ENCODE measurements at regions of chr10 and their contacts with region 1.

Region 1: GRCh38 chr10:99435986-99436638 is 5.7 kb upstream of the GOT1 start:
- DNase-seq: no peak
- ATAC-seq: peak; percentile 69
- H3K4me3 Mint-ChIP-seq: no peak overlapping the region
- H3K27ac Mint-ChIP-seq: no peak overlapping the region
- H3K4me1 Mint-ChIP-seq: peaks cover 10% of the 10 kb centered on the region
- H3K27me3 Mint-ChIP-seq: no peaks in the 10 kb centered on the region
- CTCF ChIP-seq: peak; percentile 53

Region 2: GRCh38 chr10:98563811-98564210 is 872.3 kb before region 1 on chr10:
- CTCF ChIA-PET with region 1: no interaction called
- POLR2A ChIA-PET with region 1: no interaction called
- intact Hi-C with region 1: no loop called
- DNase-seq: no peak
- ATAC-seq: no peak
- H3K4me3 Mint-ChIP-seq: no peak overlapping the region
- H3K27ac Mint-ChIP-seq: no peak overlapping the region
- H3K4me1 Mint-ChIP-seq: no peaks in the 10 kb centered on the region
- H3K27me3 Mint-ChIP-seq: peaks cover 3% of the 10 kb centered on the region
- CTCF ChIP-seq: no peak

Region 3: DNA sequence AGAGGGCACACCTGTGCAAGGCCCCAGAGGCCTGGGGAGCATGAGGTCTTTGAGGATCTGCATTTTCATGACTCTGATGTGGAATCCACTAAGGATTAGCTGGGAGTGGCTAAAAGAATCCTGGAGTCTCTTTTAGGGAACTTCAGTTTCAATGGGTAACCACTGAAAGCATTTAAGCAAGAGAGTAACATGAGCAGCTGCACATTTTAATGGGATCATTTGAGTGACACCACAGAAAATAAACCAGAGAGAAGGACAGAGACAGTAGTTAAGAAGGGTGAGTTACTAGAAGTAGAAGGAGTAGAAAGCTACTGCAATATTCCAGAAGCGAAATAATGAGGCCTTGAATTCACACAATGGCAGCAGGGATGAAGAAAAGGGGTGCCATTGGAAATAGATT is 10.9 kb before region 1 on chr10:
- CTCF ChIA-PET with region 1: interaction called, 13 read pairs
- POLR2A ChIA-PET with region 1: no interaction called
- intact Hi-C with region 1: no loop called
- DNase-seq: no peak
- ATAC-seq: no peak
- H3K4me3 Mint-ChIP-seq: no peak overlapping the region
- H3K27ac Mint-ChIP-seq: no peak overlapping the region
- H3K4me1 Mint-ChIP-seq: peaks cover 14% of the 10 kb centered on the region
- H3K27me3 Mint-ChIP-seq: no peaks in the 10 kb centered on the region
- CTCF ChIP-seq: no peak

Region 4: GRCh38 chr10:99548041-99548530 is 112.0 kb after region 1 on chr10:
- CTCF ChIA-PET with region 1: interaction called, 21 read pairs
- POLR2A ChIA-PET with region 1: no interaction called
- intact Hi-C with region 1: loop called (anchors 1 kb)
- DNase-seq: no peak
- ATAC-seq: peak; percentile 56
- H3K4me3 Mint-ChIP-seq: no peak overlapping the region
- H3K27ac Mint-ChIP-seq: no peak overlapping the region
- H3K4me1 Mint-ChIP-seq: no peaks in the 10 kb centered on the region
- H3K27me3 Mint-ChIP-seq: peaks cover 55% of the 10 kb centered on the region
- CTCF ChIP-seq: no peak

Region 5: DNA sequence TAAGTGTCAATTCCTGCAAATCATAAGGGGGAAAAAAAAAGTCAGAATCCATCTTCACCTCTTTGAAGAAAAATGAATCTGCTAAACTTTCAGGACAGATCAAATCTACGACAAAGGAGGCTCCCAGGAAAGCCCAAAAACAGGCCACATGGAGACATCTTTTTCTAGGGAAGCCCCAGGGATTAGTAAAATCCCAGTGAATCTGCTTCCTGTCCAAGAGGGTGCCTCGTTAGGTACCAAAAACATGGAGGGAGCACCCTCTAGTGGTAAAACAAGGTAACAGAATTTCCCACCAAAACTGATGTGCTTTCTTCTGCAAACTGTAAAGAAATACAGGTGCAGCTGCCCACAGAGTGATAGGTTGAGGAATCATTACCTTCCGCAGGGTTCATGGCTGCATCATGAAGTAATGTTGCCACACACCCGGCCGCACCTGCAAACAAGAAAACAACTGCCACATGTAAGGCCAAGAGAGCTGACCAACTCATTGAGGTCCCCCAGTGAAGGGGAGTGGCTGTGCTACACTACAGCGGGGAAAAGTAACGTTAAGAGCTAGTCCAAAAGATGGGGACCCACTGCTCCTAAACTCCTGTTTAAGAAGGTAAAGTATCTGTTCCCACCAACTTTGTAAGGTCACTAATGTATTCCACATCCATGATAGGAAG is 176.2 kb after region 1 on chr10:
- CTCF ChIA-PET with region 1: interaction called, 26 read pairs
- POLR2A ChIA-PET with region 1: no interaction called
- intact Hi-C with region 1: loop called (anchors 1 kb)
- DNase-seq: peak; percentile 19
- ATAC-seq: peak; percentile 60
- H3K4me3 Mint-ChIP-seq: no peak overlapping the region
- H3K27ac Mint-ChIP-seq: no peak overlapping the region
- H3K4me1 Mint-ChIP-seq: peaks cover 51% of the 10 kb centered on the region
- H3K27me3 Mint-ChIP-seq: no peaks in the 10 kb centered on the region
- CTCF ChIP-seq: peak; percentile 89

Region 6: GRCh38 chr10:99698504-99699080 is 262.5 kb after region 1 on chr10:
- CTCF ChIA-PET with region 1: interaction called, 4 read pairs
- POLR2A ChIA-PET with region 1: no interaction called
- intact Hi-C with region 1: loop called (anchors 1 kb)
- DNase-seq: no peak
- ATAC-seq: no peak
- H3K4me3 Mint-ChIP-seq: no peak overlapping the region
- H3K27ac Mint-ChIP-seq: no peak overlapping the region
- H3K4me1 Mint-ChIP-seq: no peaks in the 10 kb centered on the region
- H3K27me3 Mint-ChIP-seq: no peaks in the 10 kb centered on the region
- CTCF ChIP-seq: no peak

Region 7: DNA sequence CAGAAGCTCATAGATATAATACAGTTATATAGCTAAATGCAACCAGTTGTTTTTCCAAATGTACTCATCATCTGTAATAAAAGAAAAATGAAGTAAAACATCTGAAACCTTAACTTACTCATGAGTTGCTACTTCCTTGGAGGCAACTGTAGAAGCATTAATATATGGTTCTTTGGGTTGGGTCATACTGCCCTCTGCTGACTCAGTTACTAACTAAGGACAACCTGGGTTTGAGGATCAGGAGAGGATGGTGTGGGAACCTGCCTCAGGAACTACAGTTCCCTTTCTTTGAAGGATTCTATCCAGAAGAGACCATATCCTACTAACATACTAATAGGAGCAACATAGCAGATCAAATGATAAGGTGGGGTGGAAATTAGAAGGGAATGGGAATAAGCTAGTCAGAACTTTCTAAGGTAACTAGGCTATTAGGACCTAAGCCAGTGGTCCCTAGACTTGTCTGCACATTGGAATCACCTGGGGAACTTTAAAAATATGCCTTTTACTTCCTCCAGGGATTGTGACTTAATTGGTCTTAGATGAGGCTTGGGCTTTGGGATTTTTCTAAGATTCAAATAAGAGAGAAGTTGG is 275.1 kb after region 1 on chr10:
- CTCF ChIA-PET with region 1: interaction called, 32 read pairs
- POLR2A ChIA-PET with region 1: no interaction called
- intact Hi-C with region 1: loop called (anchors 1 kb)
- DNase-seq: no peak
- ATAC-seq: peak; percentile 60
- H3K4me3 Mint-ChIP-seq: no peak overlapping the region
- H3K27ac Mint-ChIP-seq: no peak overlapping the region
- H3K4me1 Mint-ChIP-seq: no peaks in the 10 kb centered on the region
- H3K27me3 Mint-ChIP-seq: no peaks in the 10 kb centered on the region
- CTCF ChIP-seq: no peak

Region 8: DNA sequence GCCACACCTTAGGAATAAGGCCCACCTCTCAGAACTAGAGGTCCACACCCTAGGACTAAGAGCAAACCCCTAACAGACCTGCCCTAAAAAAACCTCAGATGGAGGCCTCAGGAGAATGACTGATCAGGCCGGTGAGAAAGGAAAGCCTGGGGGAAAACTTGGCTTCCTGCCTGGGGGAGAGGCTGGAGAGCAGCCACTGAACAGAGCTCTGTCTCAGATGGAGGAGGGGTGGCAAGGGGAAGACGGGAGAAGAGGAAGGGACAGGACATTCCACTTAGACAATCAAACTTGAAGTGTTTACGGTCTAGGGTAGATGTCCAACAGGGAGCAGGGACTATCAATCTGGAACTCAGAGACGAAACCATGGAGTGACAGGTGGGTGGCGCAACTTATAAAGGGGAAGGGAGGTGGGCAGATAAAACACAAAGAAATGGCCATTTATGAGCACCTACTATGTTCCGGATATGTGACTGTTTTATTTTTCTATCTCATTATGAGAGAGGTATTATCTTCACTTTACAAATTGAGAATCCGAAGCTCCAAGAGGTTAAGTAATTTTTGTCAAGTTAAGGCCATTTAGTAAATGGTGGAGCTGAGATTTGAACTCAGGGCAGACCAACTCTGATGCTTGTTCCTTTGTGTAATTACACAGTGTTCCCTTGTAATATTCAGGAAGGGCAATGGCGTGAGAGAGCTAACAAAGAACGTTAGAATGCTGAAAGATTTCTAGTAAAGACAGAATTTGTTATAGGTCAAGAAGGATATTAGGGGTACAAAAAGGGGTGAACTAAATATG is 491.0 kb after region 1 on chr10:
- CTCF ChIA-PET with region 1: no interaction called
- POLR2A ChIA-PET with region 1: no interaction called
- intact Hi-C with region 1: no loop called
- DNase-seq: no peak
- ATAC-seq: no peak
- H3K4me3 Mint-ChIP-seq: no peak overlapping the region
- H3K27ac Mint-ChIP-seq: no peak overlapping the region
- H3K4me1 Mint-ChIP-seq: peaks cover 15% of the 10 kb centered on the region
- H3K27me3 Mint-ChIP-seq: no peaks in the 10 kb centered on the region
- CTCF ChIP-seq: no peak

Region 9: DNA sequence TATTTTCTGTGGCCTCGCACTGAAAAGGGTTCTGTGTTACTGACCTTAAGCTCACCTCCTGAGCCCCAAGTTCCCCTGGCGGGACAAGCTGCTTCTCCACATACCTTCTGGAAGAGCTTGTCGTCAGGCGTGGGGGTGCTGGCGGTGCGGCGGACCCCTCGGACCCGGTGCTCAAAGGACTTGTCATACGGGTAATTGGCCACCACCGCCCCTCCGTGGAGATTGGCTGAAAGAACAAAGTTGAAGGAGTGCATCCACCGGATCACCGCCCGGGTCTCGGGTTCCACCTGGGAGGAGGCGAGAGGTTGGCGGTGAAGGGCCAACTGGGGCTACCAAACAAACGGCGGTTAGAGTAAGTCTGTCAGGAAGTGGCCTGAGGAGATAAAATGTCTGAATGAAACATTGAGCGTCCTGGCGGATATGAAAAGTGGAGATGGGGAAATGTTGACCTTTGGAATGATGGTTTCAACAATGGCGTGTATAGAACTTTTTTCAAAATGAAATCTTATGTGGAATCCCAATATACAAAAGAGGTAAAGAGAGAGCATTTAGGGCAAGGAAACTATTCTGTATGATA is 629.1 kb after region 1 on chr10:
- CTCF ChIA-PET with region 1: no interaction called
- POLR2A ChIA-PET with region 1: no interaction called
- intact Hi-C with region 1: no loop called
- DNase-seq: no peak
- ATAC-seq: no peak
- H3K4me3 Mint-ChIP-seq: no peak overlapping the region
- H3K27ac Mint-ChIP-seq: no peak overlapping the region
- H3K4me1 Mint-ChIP-seq: no peaks in the 10 kb centered on the region
- H3K27me3 Mint-ChIP-seq: peaks cover 10% of the 10 kb centered on the region
- CTCF ChIP-seq: no peak